AG04450 (cell line): ENCODE measurements at regions of chr7 and their contacts with region 1.

Region 1: GRCh38 chr7:27110186-27111031 is 7.9 kb upstream of the HOXA2 start:
- DNase-seq: peak; percentile 68
- H3K4me3 ChIP-seq: peak overlapping the region; percentile 84
- H3K27ac ChIP-seq: peak overlapping the region; percentile 95
- H3K27me3 ChIP-seq: no peaks in the 10 kb centered on the region
- CTCF ChIP-seq: no peak

Region 2: GRCh38 chr7:27122077-27122910 is 11.9 kb after region 1 on chr7:
- CTCF ChIA-PET with region 1: interaction called, 4 read pairs
- POLR2A ChIA-PET with region 1: interaction called, 21 read pairs
- DNase-seq: no peak
- H3K4me3 ChIP-seq: peak overlapping the region; percentile 60
- H3K27ac ChIP-seq: peak overlapping the region; percentile 94
- H3K27me3 ChIP-seq: no peaks in the 10 kb centered on the region
- CTCF ChIP-seq: no peak

Region 3: GRCh38 chr7:27551803-27552400 is 441.5 kb after region 1 on chr7:
- CTCF ChIA-PET with region 1: no interaction called
- POLR2A ChIA-PET with region 1: no interaction called
- DNase-seq: no peak
- H3K4me3 ChIP-seq: no peak overlapping the region
- H3K27ac ChIP-seq: no peak overlapping the region
- H3K27me3 ChIP-seq: no peaks in the 10 kb centered on the region
- CTCF ChIP-seq: no peak